PC-3 (cell line): ENCODE measurements at regions of chr9 and their contacts with region 1.

Region 1: GRCh38 chr9:32589083-32589723 is 16.2 kb upstream of the NDUFB6 start:
- DNase-seq: peak; percentile 68
- ATAC-seq: peak; percentile 72
- H3K4me3 ChIP-seq: no peak overlapping the region
- H3K27ac ChIP-seq: no peak overlapping the region; the same call in none of the 2 replicates
- H3K4me1 ChIP-seq: peaks cover 15% of the 10 kb centered on the region
- H3K27me3 ChIP-seq: no peaks in the 10 kb centered on the region
- CTCF ChIP-seq: peak; percentile 75

Region 2: DNA sequence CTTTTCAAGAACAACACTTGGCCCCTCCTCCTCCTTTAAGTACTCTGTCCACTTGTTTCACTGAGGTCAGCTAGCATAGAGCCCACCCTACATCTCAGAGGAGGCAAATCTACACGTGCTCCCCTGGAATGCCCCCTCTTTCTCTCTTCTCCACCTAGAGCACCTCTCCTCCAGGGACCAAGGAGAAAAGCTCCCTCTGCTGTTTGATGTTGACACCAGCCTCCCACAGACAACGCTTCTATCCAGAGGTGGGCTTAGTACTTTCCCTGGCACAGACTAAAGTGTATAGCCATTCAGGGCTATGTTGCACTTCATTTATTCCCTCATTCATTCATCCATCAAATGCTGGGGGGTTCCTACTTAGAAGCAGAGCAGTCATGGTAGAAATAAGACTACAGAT is 114.4 kb after region 1 on chr9:
- CTCF ChIA-PET with region 1: interaction called, 5 read pairs
- POLR2A ChIA-PET with region 1: no interaction called
- intact Hi-C with region 1: loop called (anchors 1 kb)
- DNase-seq: peak; percentile 29
- ATAC-seq: no peak
- H3K4me3 ChIP-seq: no peak overlapping the region
- H3K27ac ChIP-seq: no peak overlapping the region
- H3K4me1 ChIP-seq: peaks cover 59% of the 10 kb centered on the region
- H3K27me3 ChIP-seq: no peaks in the 10 kb centered on the region
- CTCF ChIP-seq: peak; percentile 60

Region 3: GRCh38 chr9:32918628-32919027 is 329.4 kb after region 1 on chr9:
- CTCF ChIA-PET with region 1: interaction called, 12 read pairs
- POLR2A ChIA-PET with region 1: no interaction called
- intact Hi-C with region 1: no loop called
- DNase-seq: no peak
- ATAC-seq: no peak
- H3K4me3 ChIP-seq: no peak overlapping the region
- H3K27ac ChIP-seq: no peak overlapping the region
- H3K4me1 ChIP-seq: no peaks in the 10 kb centered on the region
- H3K27me3 ChIP-seq: no peaks in the 10 kb centered on the region
- CTCF ChIP-seq: no peak

Region 4: GRCh38 chr9:32968101-32969011 is 379.2 kb after region 1 on chr9:
- CTCF ChIA-PET with region 1: interaction called, 10 read pairs
- POLR2A ChIA-PET with region 1: no interaction called
- intact Hi-C with region 1: loop called (anchors 1 kb)
- DNase-seq: peak; percentile 67
- ATAC-seq: no peak
- H3K4me3 ChIP-seq: no peak overlapping the region
- H3K27ac ChIP-seq: no peak overlapping the region
- H3K4me1 ChIP-seq: no peaks in the 10 kb centered on the region
- H3K27me3 ChIP-seq: no peaks in the 10 kb centered on the region
- CTCF ChIP-seq: peak; percentile 79